CD8-positive, alpha-beta T cell (primary cell): ENCODE measurements at regions of chr2 and their contacts with region 1.

Region 1: DNA sequence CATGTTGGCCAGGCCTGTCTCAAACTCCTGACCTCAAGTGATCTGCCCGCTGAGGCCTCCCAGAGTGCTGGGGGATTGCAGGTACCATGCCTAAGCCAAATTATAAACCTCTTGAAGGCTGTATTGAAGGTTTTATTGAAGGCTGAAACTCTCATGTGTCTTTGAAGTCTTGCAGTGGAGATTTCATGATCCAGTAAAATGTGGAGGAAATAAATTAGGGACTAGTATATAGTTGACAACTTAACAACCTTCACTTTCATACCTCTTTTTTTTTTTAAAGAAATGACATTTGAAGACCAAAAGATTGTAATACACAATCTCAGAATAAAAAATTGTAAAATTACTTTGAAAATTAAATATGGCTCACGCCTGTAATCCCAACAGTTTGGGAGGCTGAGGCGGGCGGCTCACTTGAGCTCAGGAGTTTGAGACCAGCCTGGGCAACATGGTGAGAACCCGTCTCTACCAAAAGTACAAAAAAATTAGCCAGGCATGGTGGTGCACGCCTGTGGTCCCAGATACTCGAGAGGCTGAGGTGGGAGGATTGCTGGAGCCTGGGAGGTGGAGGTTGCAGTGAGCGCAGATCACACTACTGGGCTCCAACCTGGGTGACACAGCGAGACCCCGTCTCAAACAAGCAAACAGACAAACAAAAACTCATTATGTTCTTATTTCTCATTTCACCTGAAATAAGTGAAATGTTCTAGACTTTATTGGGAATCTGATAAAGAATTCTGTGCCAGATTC is 8.0 kb downstream of the EML4 start:
- DNase-seq: no peak
- ATAC-seq: no peak
- H3K4me3 ChIP-seq: no peak overlapping the region
- H3K4me3 Mint-ChIP-seq: no peak overlapping the region
- H3K27ac ChIP-seq: no peak overlapping the region
- H3K27ac Mint-ChIP-seq: peak overlapping the region; percentile 10
- H3K4me1 ChIP-seq: peaks cover 71% of the 10 kb centered on the region
- H3K4me1 Mint-ChIP-seq: peaks cover 74% of the 10 kb centered on the region
- H3K27me3 ChIP-seq: no peaks in the 10 kb centered on the region
- H3K27me3 Mint-ChIP-seq: no peaks in the 10 kb centered on the region
- CTCF ChIP-seq: no peak

Region 2: DNA sequence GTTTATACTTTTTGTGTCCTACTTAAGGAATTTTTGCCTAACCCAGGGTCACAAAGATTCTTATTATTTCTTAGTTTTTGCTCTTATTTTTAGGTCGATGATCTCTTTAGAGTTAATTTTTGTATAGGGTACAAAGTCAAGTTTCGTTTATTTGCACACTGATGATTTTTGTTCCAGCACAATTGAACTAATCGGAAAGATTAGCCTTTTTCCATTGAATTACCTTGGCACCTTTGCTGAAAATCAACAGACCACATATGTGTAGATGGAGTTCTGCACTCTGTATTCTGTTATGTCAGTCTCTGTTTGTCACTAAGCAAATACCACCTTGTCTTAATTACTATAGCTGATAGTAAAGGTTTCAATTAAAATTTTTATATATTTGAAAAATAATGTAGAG is 10.7 kb after region 1 on chr2:
- CTCF ChIA-PET with region 1: no interaction called
- POLR2A ChIA-PET with region 1: interaction called, 6 read pairs
- intact Hi-C with region 1: loop called in 1 of 2 experiments (anchors 1 kb)
- DNase-seq: no peak
- ATAC-seq: no peak
- H3K4me3 ChIP-seq: no peak overlapping the region
- H3K4me3 Mint-ChIP-seq: no peak overlapping the region
- H3K27ac ChIP-seq: no peak overlapping the region
- H3K27ac Mint-ChIP-seq: no peak overlapping the region
- H3K4me1 ChIP-seq: peaks cover 50% of the 10 kb centered on the region
- H3K4me1 Mint-ChIP-seq: peaks cover 78% of the 10 kb centered on the region
- H3K27me3 ChIP-seq: no peaks in the 10 kb centered on the region
- H3K27me3 Mint-ChIP-seq: no peaks in the 10 kb centered on the region
- CTCF ChIP-seq: no peak

Region 3: GRCh38 chr2:42256505-42256904 is 79.3 kb after region 1 on chr2:
- CTCF ChIA-PET with region 1: no interaction called
- POLR2A ChIA-PET with region 1: no interaction called
- intact Hi-C with region 1: no loop called
- DNase-seq: peak in 1 of 9 experiments; percentile 38
- ATAC-seq: no peak
- H3K4me3 ChIP-seq: no peak overlapping the region
- H3K4me3 Mint-ChIP-seq: no peak overlapping the region
- H3K27ac ChIP-seq: peak overlapping the region in 1 of 2 experiments; percentile 42
- H3K27ac Mint-ChIP-seq: no peak overlapping the region
- H3K4me1 ChIP-seq: peaks cover 29% of the 10 kb centered on the region
- H3K4me1 Mint-ChIP-seq: peaks cover 57% of the 10 kb centered on the region
- H3K27me3 ChIP-seq: no peaks in the 10 kb centered on the region
- H3K27me3 Mint-ChIP-seq: no peaks in the 10 kb centered on the region
- CTCF ChIP-seq: no peak